Activated CD8-positive, alpha-beta memory T cell treated with anti-CD3 and anti-CD28 coated beads, Interleukin-2, amount 10 ng/mL, durations not matched to agents 7 days and 5 days (primary cell): ENCODE measurements at regions of chr22 and their contacts with region 1.

Region 1: DNA sequence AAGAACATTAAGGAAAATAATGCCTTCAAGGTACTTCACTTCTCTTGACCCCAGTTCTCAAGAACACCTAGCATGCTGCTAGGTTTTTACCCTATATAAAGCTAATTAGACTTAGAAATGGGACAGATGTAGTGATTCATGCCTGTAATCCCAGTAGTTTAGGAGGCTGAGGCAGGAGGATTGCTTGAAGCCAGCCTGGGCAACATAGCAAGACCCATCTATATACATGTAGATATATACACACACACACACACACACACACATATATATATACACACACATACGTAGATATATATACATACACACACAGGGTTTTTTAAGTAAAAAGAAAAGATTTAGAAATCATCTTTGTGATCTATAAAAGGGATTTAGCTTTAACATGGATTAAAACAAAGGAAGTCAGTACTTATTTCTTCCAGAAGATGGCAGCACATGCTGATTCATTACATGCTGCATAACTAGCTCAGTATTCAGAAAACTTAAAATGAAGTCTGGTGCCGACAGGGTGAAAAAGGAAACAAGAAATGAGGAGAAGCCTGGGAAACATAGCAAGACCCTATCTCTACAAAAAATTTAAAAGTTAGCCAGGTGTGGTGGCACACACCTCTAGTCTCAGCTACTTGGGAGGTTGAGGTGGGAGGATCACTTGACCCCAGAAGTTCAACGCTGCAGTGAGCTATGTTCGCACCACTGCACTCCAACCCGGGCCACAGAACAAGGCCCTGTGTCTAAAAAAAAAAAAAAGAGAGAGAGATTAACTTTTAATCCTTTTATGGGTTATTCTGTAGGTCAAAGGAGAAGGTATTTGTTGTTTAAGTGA is 28.5 kb upstream of the RBX1 start:
- DNase-seq: no peak
- ATAC-seq: peak; percentile 86
- H3K4me3 Mint-ChIP-seq: no peak overlapping the region
- H3K27ac Mint-ChIP-seq: peak overlapping the region; percentile 69
- H3K4me1 Mint-ChIP-seq: peaks cover 4% of the 10 kb centered on the region
- H3K27me3 Mint-ChIP-seq: no peaks in the 10 kb centered on the region

Region 2: GRCh38 chr22:40829131-40829530 is 93.6 kb before region 1 on chr22:
- CTCF ChIA-PET with region 1: no interaction called
- DNase-seq: no peak
- ATAC-seq: no peak
- H3K4me3 Mint-ChIP-seq: no peak overlapping the region
- H3K27ac Mint-ChIP-seq: no peak overlapping the region
- H3K4me1 Mint-ChIP-seq: no peaks in the 10 kb centered on the region
- H3K27me3 Mint-ChIP-seq: no peaks in the 10 kb centered on the region

Region 3: DNA sequence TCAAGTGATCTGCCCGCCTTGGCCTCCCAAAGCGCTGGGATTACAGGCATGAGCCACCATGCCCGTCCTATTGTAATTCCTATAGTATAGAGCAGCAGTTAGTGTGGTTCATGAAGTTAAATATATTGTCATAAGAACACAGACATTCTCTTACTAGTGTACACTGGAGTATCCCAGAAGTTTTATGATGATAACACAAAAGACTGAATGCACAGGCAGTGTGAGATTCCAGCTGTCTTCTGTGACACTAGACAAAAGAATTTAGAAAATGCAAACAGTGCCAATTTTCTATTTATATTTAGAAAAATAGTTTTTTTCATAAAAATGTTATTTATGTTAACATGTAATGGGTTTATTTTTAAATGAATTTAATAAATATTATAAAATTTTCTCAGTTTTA is 10.9 kb before region 1 on chr22:
- CTCF ChIA-PET with region 1: interaction called, 15 read pairs
- DNase-seq: no peak
- ATAC-seq: no peak
- H3K4me3 Mint-ChIP-seq: no peak overlapping the region
- H3K27ac Mint-ChIP-seq: no peak overlapping the region
- H3K4me1 Mint-ChIP-seq: no peaks in the 10 kb centered on the region
- H3K27me3 Mint-ChIP-seq: no peaks in the 10 kb centered on the region

Region 4: GRCh38 chr22:40950962-40951794 is 28.5 kb after region 1 on chr22 and contains the start of gene RBX1:
- CTCF ChIA-PET with region 1: interaction called, 27 read pairs
- DNase-seq: peak; percentile 99
- ATAC-seq: peak; percentile 82
- H3K4me3 Mint-ChIP-seq: peak within 1 kb of the TSS; percentile 96
- H3K27ac Mint-ChIP-seq: peak within 1 kb of the TSS; percentile 98
- H3K4me1 Mint-ChIP-seq: peaks cover 39% of the 10 kb centered on the region
- H3K27me3 Mint-ChIP-seq: no peaks in the 10 kb centered on the region
- total RNA-seq, gene RBX1: 76.9 to 82.8 TPM

Region 5: GRCh38 chr22:41022470-41023298 is 100.0 kb after region 1 on chr22:
- CTCF ChIA-PET with region 1: interaction called, 16 read pairs
- DNase-seq: peak; percentile 85
- ATAC-seq: peak; percentile 78
- H3K4me3 Mint-ChIP-seq: peak overlapping the region; percentile 73
- H3K27ac Mint-ChIP-seq: peak overlapping the region; percentile 80
- H3K4me1 Mint-ChIP-seq: peaks cover 13% of the 10 kb centered on the region
- H3K27me3 Mint-ChIP-seq: peaks cover 16% of the 10 kb centered on the region

Region 6: GRCh38 chr22:41091132-41092022 is 168.7 kb after region 1 on chr22:
- CTCF ChIA-PET with region 1: interaction called, 17 read pairs
- DNase-seq: peak; percentile 99
- ATAC-seq: peak; percentile 86
- H3K4me3 Mint-ChIP-seq: peak overlapping the region; percentile 95
- H3K27ac Mint-ChIP-seq: peak overlapping the region; percentile 99
- H3K4me1 Mint-ChIP-seq: peaks cover 19% of the 10 kb centered on the region
- H3K27me3 Mint-ChIP-seq: no peaks in the 10 kb centered on the region

Region 7: GRCh38 chr22:41197038-41197972 is 274.6 kb after region 1 on chr22:
- CTCF ChIA-PET with region 1: interaction called, 18 read pairs
- DNase-seq: peak; percentile 84
- ATAC-seq: peak; percentile 89
- H3K4me3 Mint-ChIP-seq: peak overlapping the region; percentile 82
- H3K27ac Mint-ChIP-seq: peak overlapping the region; percentile 39
- H3K4me1 Mint-ChIP-seq: peaks cover 13% of the 10 kb centered on the region
- H3K27me3 Mint-ChIP-seq: peaks cover 25% of the 10 kb centered on the region